Heart left ventricle (tissue), 16 donors: ENCODE measurements at regions of chr20 and their contacts with region 1.

Region 1: GRCh38 chr20:60589627-60590026 is 631.4 kb downstream of the CDH26 start:
- DNase-seq: no peak
- ATAC-seq: no peak
- H3K4me3 ChIP-seq: no peak overlapping the region
- H3K27ac ChIP-seq: no peak overlapping the region
- H3K4me1 ChIP-seq: no peaks in the 10 kb centered on the region
- H3K27me3 ChIP-seq: peaks cover 0 to 8% (median 0%) of the 10 kb centered on the region in 9 donors
- CTCF ChIP-seq: no peak
- POLR2A ChIP-seq: no peak

Region 2: GRCh38 chr20:60540591-60540990 is 49.0 kb before region 1 on chr20:
- intact Hi-C with region 1: no loop called
- DNase-seq: no peak
- ATAC-seq: no peak
- H3K4me3 ChIP-seq: no peak overlapping the region
- H3K27ac ChIP-seq: no peak overlapping the region
- H3K4me1 ChIP-seq: no peaks in the 10 kb centered on the region
- H3K27me3 ChIP-seq: no peaks in the 10 kb centered on the region
- CTCF ChIP-seq: no peak
- POLR2A ChIP-seq: no peak

Region 3: DNA sequence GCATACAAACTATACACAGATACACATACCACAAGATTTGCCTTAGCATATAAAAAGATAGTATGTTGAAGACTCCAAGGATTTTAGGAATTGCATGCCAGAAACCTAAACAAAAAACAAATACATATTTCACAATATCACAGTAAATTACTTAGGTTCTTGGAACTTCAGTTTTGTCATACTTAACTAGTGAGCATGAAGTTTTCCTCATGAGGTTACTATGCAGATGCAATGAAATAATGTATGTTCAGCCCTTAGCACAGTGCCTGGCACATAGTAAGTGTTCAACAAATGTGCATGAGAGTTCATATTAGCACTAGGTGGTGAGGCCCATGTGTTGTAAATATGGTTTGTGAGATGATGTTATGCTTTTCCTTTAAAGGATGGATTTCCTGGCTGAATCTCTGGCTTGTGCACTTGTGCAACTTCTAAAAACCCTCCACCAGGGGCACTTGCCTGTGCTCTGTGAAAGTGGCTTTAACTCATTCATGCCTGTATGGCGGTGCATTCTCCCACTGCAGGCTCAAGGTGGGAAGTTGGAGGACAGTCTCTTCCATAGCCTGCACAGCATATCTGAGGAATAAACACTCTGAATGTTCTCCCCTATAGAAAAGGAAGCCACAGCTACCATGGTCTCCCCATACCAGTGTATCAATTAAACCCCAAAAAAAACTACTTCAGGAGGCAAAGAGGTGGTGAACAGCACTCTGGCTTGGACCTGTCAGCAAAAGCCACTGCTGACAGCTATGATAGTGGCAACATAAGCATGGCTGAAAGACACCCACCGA is 38.3 kb after region 1 on chr20:
- intact Hi-C with region 1: loop called in 1 of 10 experiments (anchors 2 kb)
- DNase-seq: no peak
- ATAC-seq: no peak
- H3K4me3 ChIP-seq: no peak overlapping the region
- H3K27ac ChIP-seq: no peak overlapping the region
- H3K4me1 ChIP-seq: no peaks in the 10 kb centered on the region
- H3K27me3 ChIP-seq: peaks cover 0 to 8% (median 0%) of the 10 kb centered on the region in 9 donors
- CTCF ChIP-seq: no peak
- POLR2A ChIP-seq: no peak

Region 4: DNA sequence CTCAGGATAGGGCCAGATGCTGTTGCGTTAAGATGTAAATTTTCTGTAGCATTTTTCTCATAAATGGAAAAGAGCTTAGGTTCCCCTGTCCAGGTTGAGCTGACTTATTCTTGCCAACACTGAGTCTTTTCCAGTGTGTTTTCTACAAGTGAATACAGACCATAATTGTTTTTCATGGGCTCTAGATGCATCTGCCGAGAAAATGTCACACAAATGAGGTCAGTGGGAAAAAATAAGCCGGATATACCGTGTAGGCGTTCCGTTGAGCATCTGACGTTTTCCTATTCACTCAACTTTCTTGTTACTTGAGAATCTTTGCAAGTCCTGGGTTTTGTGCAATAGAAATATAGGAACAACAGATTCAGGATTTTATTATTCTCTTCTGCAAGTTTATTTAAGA is 79.6 kb after region 1 on chr20:
- intact Hi-C with region 1: no loop called
- DNase-seq: no peak
- ATAC-seq: no peak
- H3K4me3 ChIP-seq: no peak overlapping the region
- H3K27ac ChIP-seq: no peak overlapping the region
- H3K4me1 ChIP-seq: no peaks in the 10 kb centered on the region
- H3K27me3 ChIP-seq: peaks cover 0 to 17% (median 0%) of the 10 kb centered on the region in 9 donors
- CTCF ChIP-seq: no peak
- POLR2A ChIP-seq: no peak

Region 5: DNA sequence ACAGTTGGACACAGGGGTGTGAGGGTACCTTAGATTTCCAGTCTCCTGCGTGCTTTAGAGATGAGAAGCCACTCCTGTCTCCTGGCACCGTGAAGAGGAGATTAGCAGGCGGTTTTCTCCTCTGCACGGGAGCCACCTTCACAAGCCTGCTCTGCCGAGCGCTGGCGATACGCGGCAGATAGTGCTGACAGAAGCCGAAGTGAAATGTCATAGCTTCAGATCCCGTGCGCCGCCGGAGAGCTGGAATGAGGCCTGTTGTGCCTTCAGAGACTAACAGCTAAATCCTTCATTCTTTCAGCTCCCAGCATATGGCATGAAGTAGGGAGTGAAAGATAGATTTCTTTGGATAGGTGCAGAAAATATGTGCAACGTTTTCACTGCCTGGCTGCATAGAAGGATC is 1105.1 kb after region 1 on chr20:
- intact Hi-C with region 1: no loop called
- DNase-seq: peak in 1 of 5 donors; percentile 39
- ATAC-seq: peak in 2 of 4 donors; percentile 16 to 54
- H3K4me3 ChIP-seq: no peak overlapping the region
- H3K27ac ChIP-seq: no peak overlapping the region
- H3K4me1 ChIP-seq: peaks cover 0 to 17% (median 0%) of the 10 kb centered on the region in 12 donors
- H3K27me3 ChIP-seq: peaks cover 0 to 39% (median 0%) of the 10 kb centered on the region in 9 donors
- CTCF ChIP-seq: no peak
- POLR2A ChIP-seq: no peak